HCT116 (cell line): ENCODE measurements at regions of chr19 and their contacts with region 1.

Region 1: GRCh38 chr19:8580710-8581281 is 3.6 kb upstream of the MYO1F start:
- DNase-seq: peak; percentile 56
- ATAC-seq: peak; percentile 84
- H3K4me3 ChIP-seq: no peak overlapping the region
- H3K27ac ChIP-seq: no peak overlapping the region
- H3K4me1 ChIP-seq: peaks cover 23 to 24% of the 10 kb centered on the region in 2 experiments
- H3K27me3 ChIP-seq: peaks cover 7% of the 10 kb centered on the region; the same call in 1 of the 2 replicates
- CTCF ChIP-seq: peak; percentile 99 to 100 (median 100)
- POLR2A ChIP-seq: no peak
- RAD21 ChIP-seq: peak; percentile 89

Region 2: GRCh38 chr19:8261347-8262310 is 319.2 kb before region 1 on chr19:
- CTCF ChIA-PET with region 1: no interaction called
- POLR2A ChIA-PET with region 1: no interaction called
- RAD21 ChIA-PET with region 1: no interaction called
- intact Hi-C with region 1: loop called (anchors 10 kb)
- DNase-seq: no peak
- ATAC-seq: no peak; the same call in 1 of the 2 replicates
- H3K4me3 ChIP-seq: no peak overlapping the region
- H3K27ac ChIP-seq: no peak overlapping the region
- H3K4me1 ChIP-seq: peaks cover 11 to 27% of the 10 kb centered on the region in 2 experiments
- H3K27me3 ChIP-seq: no peaks in the 10 kb centered on the region
- CTCF ChIP-seq: no peak
- POLR2A ChIP-seq: no peak
- RAD21 ChIP-seq: no peak

Region 3: DNA sequence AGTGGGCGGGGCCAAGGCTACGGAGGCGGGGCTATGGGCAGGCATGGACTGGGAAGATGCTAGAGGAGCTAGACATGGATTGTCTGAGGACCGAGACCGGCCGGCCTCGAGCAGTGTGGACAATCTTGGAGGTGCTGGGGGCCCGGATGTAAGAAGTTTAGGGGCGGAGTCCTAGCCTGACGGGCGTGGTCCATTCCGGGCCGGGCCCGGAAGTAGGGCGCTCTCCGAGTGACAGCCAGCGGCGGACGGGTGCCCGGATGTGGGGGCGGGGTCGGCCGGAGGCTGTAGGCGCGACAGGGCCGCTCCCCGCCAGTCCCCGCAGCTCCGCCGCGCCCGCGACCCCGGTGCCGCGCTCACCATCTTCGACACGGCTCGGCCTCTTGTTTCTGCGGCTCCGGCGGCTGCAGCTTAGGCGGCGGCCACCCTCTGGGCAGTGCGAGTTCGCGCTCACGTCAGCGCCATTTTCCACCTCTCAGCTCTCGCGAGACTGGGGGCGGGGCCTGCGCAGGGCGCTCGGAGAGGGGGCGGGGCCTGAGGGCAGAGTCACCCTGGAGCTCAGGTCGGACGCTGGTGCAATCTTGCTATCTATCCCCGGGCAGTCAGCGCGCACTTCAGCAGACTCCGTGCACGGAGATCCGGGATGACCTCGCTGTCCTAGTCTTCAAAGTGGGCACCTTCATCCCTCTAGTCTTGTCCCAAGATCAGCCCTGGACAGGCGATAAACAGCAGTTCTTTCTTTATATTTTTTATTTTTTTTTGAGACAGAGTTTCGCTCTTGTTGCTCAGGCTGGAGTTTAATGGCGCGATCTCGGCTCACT is 66.9 kb before region 1 on chr19 and contains the start of gene ZNF414:
- CTCF ChIA-PET with region 1: interaction called, 21 read pairs
- POLR2A ChIA-PET with region 1: interaction called, 13 read pairs
- RAD21 ChIA-PET with region 1: no interaction called
- intact Hi-C with region 1: no loop called
- DNase-seq: peak; percentile 97
- ATAC-seq: peak; percentile 85
- H3K4me3 ChIP-seq: peak within 1 kb of the TSS; percentile 59 to 78
- H3K27ac ChIP-seq: peak within 1 kb of the TSS; percentile 95
- H3K4me1 ChIP-seq: peaks cover 21 to 41% of the 10 kb centered on the region in 2 experiments
- H3K27me3 ChIP-seq: no peaks in the 10 kb centered on the region
- CTCF ChIP-seq: no peak
- POLR2A ChIP-seq: peak; percentile 94
- RAD21 ChIP-seq: no peak
- total RNA-seq, gene ZNF414: 31.9 TPM

Region 4: DNA sequence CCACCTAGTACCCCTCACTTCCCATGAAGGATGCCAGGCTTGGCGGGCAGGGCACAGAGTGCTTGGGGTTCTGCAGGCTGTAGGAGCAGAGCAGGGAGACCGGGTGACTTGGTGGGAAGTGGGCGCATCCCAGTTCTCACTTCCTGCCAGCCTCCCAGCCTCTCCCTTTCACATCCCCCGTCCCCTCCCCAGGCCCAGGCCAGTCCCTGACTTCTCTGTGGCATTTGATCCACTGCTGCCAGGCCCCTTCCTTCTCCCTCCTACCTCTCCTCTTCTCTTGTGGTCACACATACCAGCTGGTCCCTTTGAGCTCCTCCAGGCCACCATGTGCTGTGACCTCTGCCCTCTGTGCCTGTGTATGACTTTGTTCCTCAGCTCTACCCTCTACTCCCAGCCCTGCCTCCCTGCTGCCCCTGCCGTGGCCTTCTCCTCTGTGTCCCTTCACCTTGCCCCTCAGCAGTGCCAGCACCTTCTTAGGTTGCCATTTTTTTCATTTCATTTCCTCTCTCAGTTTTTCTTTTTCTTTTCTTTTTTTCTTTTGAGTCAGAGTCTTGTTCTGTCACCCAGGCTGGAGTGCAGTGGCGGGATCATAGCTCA is 23.1 kb before region 1 on chr19:
- CTCF ChIA-PET with region 1: interaction called, 10 read pairs
- POLR2A ChIA-PET with region 1: no interaction called
- RAD21 ChIA-PET with region 1: no interaction called
- intact Hi-C with region 1: no loop called
- DNase-seq: no peak
- ATAC-seq: no peak
- H3K4me3 ChIP-seq: no peak overlapping the region
- H3K27ac ChIP-seq: no peak overlapping the region
- H3K4me1 ChIP-seq: peaks cover 0 to 5% of the 10 kb centered on the region in 2 experiments; a peak in 1 of 4 replicates
- H3K27me3 ChIP-seq: no peaks in the 10 kb centered on the region
- CTCF ChIP-seq: no peak
- POLR2A ChIP-seq: no peak
- RAD21 ChIP-seq: no peak

Region 5: DNA sequence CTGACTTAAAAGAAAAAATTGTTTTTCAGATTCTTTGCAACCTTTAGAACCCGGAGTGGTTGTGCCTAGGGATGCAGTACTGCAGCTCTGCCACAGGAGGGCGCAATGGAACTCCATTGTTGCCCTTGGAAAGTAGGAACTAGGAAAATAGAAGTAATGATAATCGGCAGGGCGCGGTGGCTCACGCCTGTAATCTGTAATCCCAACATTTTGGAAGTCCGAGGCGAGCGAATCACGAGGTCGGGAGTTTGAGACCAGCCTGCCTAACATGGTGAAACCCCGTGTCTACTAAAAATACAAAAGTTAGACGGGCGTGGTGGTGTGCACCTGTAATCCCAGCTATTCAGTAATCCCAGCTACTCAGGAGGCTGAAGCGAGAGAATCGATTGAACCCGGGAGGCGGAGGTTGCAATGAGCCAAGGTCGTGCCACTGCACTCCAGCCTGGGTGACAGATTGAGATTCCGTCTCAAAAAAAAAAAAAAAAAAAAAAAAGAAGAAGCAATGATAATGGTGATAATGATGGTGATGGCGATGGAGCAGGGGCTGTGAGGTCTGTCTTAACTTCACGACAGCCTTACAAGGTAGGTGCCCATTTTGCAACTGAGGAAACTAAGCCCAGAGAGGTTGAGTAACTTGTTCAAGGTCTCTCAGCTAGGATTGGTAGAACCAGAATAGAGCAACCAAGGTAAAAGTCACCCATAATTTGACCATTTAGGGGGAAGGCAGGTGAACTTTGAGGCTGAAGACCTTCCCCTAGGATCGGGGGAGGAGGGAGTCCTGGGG is 35.2 kb after region 1 on chr19:
- CTCF ChIA-PET with region 1: interaction called, 11 read pairs
- POLR2A ChIA-PET with region 1: interaction called, 4 read pairs
- RAD21 ChIA-PET with region 1: interaction called in 1 of 2 experiments, 3 read pairs
- intact Hi-C with region 1: no loop called
- DNase-seq: peak; percentile 60
- ATAC-seq: peak; percentile 63
- H3K4me3 ChIP-seq: peak overlapping the region; percentile 23 to 37
- H3K27ac ChIP-seq: no peak overlapping the region
- H3K4me1 ChIP-seq: peaks cover 8 to 30% of the 10 kb centered on the region in 2 experiments
- H3K27me3 ChIP-seq: no peaks in the 10 kb centered on the region
- CTCF ChIP-seq: peak; percentile 86 to 99 (median 97)
- POLR2A ChIP-seq: no peak
- RAD21 ChIP-seq: peak; percentile 75

Region 6: GRCh38 chr19:8697671-8698432 is 117.1 kb after region 1 on chr19:
- CTCF ChIA-PET with region 1: interaction called, 12 read pairs
- POLR2A ChIA-PET with region 1: no interaction called
- RAD21 ChIA-PET with region 1: no interaction called
- intact Hi-C with region 1: loop called (anchors 2 kb)
- DNase-seq: no peak
- ATAC-seq: peak; percentile 45; the same call in 1 of the 2 replicates
- H3K4me3 ChIP-seq: no peak overlapping the region
- H3K27ac ChIP-seq: no peak overlapping the region
- H3K4me1 ChIP-seq: no peaks in the 10 kb centered on the region; a peak in 1 of 4 replicates
- H3K27me3 ChIP-seq: 0 out of 2 replicates have a peak, but pooled peaks cover 6% of the 10 kb centered on the region
- CTCF ChIP-seq: peak in 2 of 3 experiments; percentile 50 to 58; a peak in 5 of 6 replicates
- POLR2A ChIP-seq: no peak
- RAD21 ChIP-seq: peak; percentile 49